Motor neuron (in vitro differentiated cells): ENCODE measurements at regions of chr7 and their contacts with region 1.

Region 1: GRCh38 chr7:54788664-54789063 is 29.7 kb upstream of the SEC61G start:
- ATAC-seq: peak; percentile 94 to 100 (median 100)
- H3K4me3 ChIP-seq: no peak overlapping the region
- H3K27ac ChIP-seq: no peak overlapping the region
- H3K4me1 ChIP-seq: peaks cover 0 to 4% of the 10 kb centered on the region in 2 donors

Region 2: DNA sequence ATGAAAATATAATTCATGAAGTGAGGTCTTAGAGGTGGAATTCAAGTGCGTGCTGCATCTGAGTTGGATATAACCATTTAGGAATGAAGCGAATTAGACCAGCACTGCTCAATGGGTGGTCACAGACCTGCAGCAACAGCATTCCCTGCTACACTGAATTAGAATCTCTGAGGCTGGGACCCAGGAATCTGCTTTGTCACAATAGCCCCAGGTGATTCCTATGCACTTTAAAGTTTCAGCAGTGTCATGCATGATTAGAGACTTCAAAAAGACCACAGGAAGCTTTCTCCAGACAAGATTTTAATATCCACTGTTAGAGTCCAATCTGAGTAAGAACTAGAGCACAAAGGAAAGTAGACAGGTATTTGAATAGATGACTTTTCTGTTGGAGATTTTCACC is 599.3 kb before region 1 on chr7:
- in situ Hi-C with region 1: no loop called
- ATAC-seq: peak in 1 of 8 experiments; percentile 40
- H3K4me3 ChIP-seq: no peak overlapping the region
- H3K27ac ChIP-seq: peak overlapping the region in 1 of 2 donors; percentile 6
- H3K4me1 ChIP-seq: peaks cover 8 to 18% of the 10 kb centered on the region in 2 donors

Region 3: GRCh38 chr7:55048221-55048859 is 259.7 kb after region 1 on chr7:
- in situ Hi-C with region 1: loop called in 1 of 9 experiments (anchors 25 kb)
- ATAC-seq: peak in 2 of 8 experiments; percentile 60 to 62
- H3K4me3 ChIP-seq: no peak overlapping the region
- H3K27ac ChIP-seq: no peak overlapping the region
- H3K4me1 ChIP-seq: peaks cover 0 to 13% of the 10 kb centered on the region in 2 donors

Region 4: GRCh38 chr7:55255496-55256435 is 467.1 kb after region 1 on chr7:
- in situ Hi-C with region 1: loop called in 6 of 9 experiments (anchors 10 kb)
- ATAC-seq: peak; percentile 70 to 82 (median 74)
- H3K4me3 ChIP-seq: peak overlapping the region; percentile 37 to 49 (median 43)
- H3K27ac ChIP-seq: no peak overlapping the region
- H3K4me1 ChIP-seq: peaks cover 0 to 4% of the 10 kb centered on the region in 2 donors

Region 5: DNA sequence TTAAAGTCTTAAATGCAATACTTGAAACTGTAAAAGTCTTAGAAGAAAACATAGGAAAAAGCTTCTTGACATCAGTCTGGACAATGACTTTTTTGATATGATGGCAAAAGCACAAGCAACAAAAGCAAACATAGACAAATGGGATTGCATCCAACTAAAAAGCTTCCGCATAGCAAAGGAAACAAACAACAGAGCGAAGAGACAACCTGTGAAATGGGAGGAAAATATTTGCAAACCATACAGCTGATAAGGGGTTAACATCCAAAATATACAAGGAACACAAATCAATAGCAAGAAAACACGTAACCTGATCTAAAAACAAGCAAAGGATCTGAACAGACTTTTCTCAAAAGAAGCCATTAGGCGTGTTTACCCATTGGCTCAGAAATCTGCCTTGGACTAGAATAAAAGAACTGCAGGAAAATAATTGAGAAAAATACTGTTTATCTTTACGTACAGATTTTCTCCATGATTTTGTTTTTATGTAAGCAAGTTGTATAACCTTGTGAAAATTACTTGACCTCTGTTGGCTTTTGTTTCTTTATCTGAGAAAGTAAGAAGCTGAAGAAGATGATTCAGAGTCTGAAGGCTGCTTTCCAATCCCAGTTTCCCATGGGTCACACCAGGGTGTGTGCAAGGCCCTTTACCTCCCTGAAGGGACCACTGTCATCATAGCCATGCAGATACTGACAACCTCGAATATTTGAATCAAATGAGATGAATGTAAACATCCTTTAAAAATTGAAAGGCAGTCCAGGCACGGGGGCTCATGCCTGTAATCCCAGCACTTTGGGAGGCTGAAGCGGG is 477.4 kb after region 1 on chr7:
- in situ Hi-C with region 1: loop called in 1 of 9 experiments (anchors 10 kb)
- ATAC-seq: no peak
- H3K4me3 ChIP-seq: no peak overlapping the region
- H3K27ac ChIP-seq: no peak overlapping the region
- H3K4me1 ChIP-seq: no peaks in the 10 kb centered on the region

Region 6: DNA sequence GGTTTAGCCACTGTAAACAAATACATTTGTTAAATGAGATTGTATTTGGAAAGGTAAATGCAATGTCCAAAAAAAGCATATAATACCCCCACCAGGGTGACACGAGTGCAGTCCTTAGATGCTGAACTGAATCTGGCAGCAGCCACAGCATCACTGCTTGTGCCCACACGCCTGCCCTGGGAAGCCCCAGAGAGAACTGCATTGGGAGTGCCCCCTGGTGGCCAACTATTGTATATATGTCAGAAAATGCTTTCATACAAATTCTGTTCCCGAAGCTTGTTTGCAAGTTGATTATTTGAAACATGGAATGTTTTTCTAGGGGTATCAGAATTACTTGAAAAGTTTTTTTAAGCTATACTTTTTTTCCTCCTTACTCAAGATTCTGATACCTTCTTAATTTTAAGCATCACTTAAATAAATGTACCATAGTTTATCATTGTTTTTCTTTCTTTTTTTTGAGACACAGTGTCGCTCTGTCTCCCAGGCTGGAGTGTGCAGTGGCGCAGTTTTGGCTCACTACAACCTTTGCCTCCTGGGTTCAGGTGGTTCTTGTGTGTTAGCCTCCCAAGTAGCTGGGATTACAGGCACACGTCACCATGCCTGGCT is 626.6 kb after region 1 on chr7:
- in situ Hi-C with region 1: loop called in 1 of 9 experiments (anchors 25 kb)
- ATAC-seq: peak; percentile 70 to 91 (median 79)
- H3K4me3 ChIP-seq: no peak overlapping the region
- H3K27ac ChIP-seq: no peak overlapping the region
- H3K4me1 ChIP-seq: peaks cover 1 to 2% of the 10 kb centered on the region in 2 donors